HepG2 (cell line): ENCODE measurements at regions of chr11 and their contacts with region 1.

Region 1: GRCh38 chr11:65615229-65615941 is at the start of gene PCNX3:
- DNase-seq: peak; percentile 100
- ATAC-seq: peak; percentile 72
- H3K4me3 ChIP-seq: peak within 1 kb of the TSS; percentile 90 to 97 (median 94)
- H3K27ac ChIP-seq: peak within 1 kb of the TSS; percentile 92
- H3K4me1 ChIP-seq: peaks cover 41% of the 10 kb centered on the region
- H3K27me3 ChIP-seq: no peaks in the 10 kb centered on the region; a peak in 1 of 5 replicates
- CTCF ChIP-seq: 0 out of 2 replicates have a peak, but pooled peaks have one; percentile 9
- EP300 ChIP-seq: 0 out of 4 replicates have a peak, but pooled peaks of 1 of the 2 experiments have one; percentile 27
- POLR2A ChIP-seq: peak in 1 of 2 experiments; percentile 44; a peak in 2 of 4 replicates
- RAD21 ChIP-seq: no peak
- total RNA-seq, gene PCNX3: 14.5 and 23.0 TPM in 2 replicates

Region 2: DNA sequence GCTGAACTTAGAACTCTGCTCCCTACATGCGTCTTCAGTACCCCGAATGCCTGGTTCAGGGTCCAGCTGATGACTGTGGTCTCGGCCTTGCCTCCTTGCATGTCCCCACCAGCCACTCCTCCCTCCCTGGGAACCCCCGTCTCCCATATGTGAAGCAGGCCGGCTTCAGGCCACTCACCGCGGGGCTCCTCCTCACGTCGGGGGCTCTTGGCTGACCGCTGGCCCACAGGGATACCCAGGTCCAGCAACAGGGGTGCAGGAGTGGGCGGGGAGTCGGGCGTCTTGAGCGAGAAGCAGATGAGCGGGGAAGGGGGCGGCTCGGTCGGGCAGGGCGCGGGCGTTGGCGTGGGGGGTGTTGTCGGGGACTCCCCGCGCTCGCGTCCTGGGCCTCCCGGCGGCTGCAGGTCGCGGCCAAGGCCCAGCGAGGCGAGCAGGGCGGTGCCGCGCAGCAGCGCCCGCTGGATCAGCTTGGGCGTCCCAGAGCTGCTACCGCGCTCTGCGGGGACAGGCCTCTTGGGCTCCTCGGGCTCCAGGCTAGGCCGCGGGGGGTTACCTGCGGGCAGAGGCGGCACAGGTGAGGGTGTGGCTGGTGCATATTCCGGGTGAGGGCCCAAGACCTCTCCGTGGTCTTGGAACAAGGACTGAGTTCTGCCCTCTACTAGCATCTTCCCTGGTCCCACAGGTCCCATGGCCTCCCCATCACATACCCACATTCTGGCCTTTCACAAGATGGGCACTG is 16.0 kb before region 1 on chr11:
- CTCF ChIA-PET with region 1: no interaction called
- POLR2A ChIA-PET with region 1: interaction called, 47 read pairs
- in situ Hi-C with region 1: no loop called
- intact Hi-C with region 1: no loop called
- DNase-seq: no peak
- ATAC-seq: no peak
- H3K4me3 ChIP-seq: no peak overlapping the region
- H3K27ac ChIP-seq: no peak overlapping the region
- H3K4me1 ChIP-seq: no peaks in the 10 kb centered on the region
- H3K27me3 ChIP-seq: no peaks in the 10 kb centered on the region
- CTCF ChIP-seq: no peak
- EP300 ChIP-seq: no peak
- POLR2A ChIP-seq: peak in 1 of 2 experiments; percentile 54; a peak in 1 of 4 replicates
- RAD21 ChIP-seq: no peak

Region 3: GRCh38 chr11:65637794-65638317 is 22.5 kb after region 1 on chr11 and contains the start of gene SIPA1:
- CTCF ChIA-PET with region 1: no interaction called
- POLR2A ChIA-PET with region 1: interaction called, 44 read pairs
- in situ Hi-C with region 1: no loop called
- intact Hi-C with region 1: no loop called
- DNase-seq: peak; percentile 88
- ATAC-seq: peak; percentile 83
- H3K4me3 ChIP-seq: peak within 1 kb of the TSS; percentile 52 to 88 (median 73); a peak in 5 of 6 replicates
- H3K27ac ChIP-seq: peak within 1 kb of the TSS; percentile 61
- H3K4me1 ChIP-seq: peaks cover 33% of the 10 kb centered on the region
- H3K27me3 ChIP-seq: no peaks in the 10 kb centered on the region
- CTCF ChIP-seq: peak; percentile 74
- EP300 ChIP-seq: no peak
- POLR2A ChIP-seq: peak in 1 of 2 experiments; percentile 62; a peak in 3 of 4 replicates
- RAD21 ChIP-seq: peak; percentile 63
- total RNA-seq, gene SIPA1: 5.4 and 5.8 TPM in 2 replicates

Region 4: DNA sequence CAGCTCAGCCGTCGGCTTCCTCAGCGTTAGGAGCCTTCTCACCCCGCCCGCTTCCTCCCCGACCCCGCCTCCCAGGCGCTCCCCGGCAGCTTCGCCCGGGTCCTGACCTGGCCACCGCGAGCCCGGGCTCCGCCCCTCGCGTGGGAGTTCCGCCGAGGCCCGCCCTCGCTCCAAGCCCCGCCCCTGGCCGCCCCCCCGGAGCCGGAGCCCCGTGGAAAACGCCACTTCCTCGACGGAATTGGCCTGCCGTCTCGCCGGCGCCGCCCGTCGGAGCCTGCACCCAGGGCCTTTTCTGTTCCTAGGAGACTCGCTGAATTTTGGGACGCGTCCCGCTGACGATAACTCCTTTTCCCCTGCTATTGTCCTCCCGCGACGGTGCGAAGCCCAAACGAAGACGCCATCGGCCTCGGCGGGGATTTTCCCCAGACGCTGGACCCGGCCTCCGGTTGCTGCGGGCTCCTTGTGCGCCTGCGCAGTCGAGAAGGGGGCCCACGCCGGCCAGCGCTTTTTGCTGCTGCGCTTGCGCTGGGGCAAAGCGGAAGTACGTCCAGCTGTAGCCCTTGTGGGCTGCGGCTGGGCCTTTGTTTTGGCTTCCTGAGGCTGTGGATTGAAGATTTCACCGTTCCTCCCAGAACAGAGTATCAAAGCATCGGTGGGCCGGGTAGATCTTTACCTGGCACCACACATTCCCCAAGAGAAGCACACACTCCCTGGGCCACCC is 37.3 kb after region 1 on chr11:
- CTCF ChIA-PET with region 1: no interaction called
- POLR2A ChIA-PET with region 1: interaction called, 48 read pairs
- in situ Hi-C with region 1: no loop called
- intact Hi-C with region 1: no loop called
- DNase-seq: peak; percentile 86
- ATAC-seq: peak; percentile 77
- H3K4me3 ChIP-seq: peak overlapping the region; percentile 48 to 76 (median 54); a peak in 5 of 6 replicates
- H3K27ac ChIP-seq: peak overlapping the region; percentile 98
- H3K4me1 ChIP-seq: peaks cover 35% of the 10 kb centered on the region
- H3K27me3 ChIP-seq: no peaks in the 10 kb centered on the region
- CTCF ChIP-seq: no peak
- EP300 ChIP-seq: no peak
- POLR2A ChIP-seq: peak; percentile 48 to 53; a peak in 3 of 4 replicates
- RAD21 ChIP-seq: peak; percentile 8; the same call in 1 of the 2 replicates